AG04450 (cell line): ENCODE measurements at regions of chr14 and their contacts with region 1.

Region 1: DNA sequence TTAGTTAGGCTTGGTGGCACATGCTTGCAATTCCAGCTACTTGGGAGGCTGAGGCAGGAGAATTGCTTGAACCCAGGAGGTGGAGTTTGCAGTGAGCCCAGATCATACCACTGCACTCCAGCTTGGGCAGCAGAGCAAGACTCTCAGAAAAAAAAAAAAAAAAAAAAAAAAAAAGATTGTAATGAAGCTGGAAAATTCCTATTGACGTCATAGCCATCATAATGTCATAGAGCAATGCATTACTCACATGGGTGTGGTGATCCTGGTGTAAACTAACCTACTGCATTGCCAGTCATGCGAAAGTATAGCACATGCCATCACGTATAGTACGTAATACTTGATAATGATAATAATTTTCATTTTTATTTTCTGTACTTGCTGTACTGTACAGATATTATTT is 42.7 kb upstream of the NID2 start:
- DNase-seq: no peak
- H3K4me3 ChIP-seq: no peak overlapping the region
- H3K27ac ChIP-seq: peak overlapping the region; percentile 86
- H3K27me3 ChIP-seq: no peaks in the 10 kb centered on the region
- CTCF ChIP-seq: no peak

Region 2: DNA sequence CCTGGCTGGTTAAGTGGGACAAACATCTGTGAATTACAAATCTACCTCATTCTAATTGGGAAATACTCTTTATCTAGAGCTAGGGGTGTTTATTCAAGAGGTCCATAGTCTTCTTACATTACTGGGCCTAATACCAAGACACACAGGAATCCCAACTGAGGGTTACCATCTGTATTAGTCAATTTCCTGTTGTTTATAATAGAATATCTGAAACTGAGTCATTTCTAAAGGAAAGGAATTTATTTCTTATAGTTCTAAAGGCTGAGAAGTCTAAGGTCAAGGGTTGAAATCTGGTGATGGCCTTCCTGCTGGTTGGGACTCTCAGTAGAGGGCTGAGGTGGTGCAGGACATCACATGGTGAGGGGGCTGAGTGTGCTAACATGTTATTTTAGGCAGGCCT is 86.3 kb before region 1 on chr14:
- CTCF ChIA-PET with region 1: no interaction called
- POLR2A ChIA-PET with region 1: interaction called, 14 read pairs
- DNase-seq: peak; percentile 78
- H3K4me3 ChIP-seq: no peak overlapping the region
- H3K27ac ChIP-seq: peak overlapping the region; percentile 58
- H3K27me3 ChIP-seq: no peaks in the 10 kb centered on the region
- CTCF ChIP-seq: no peak

Region 3: DNA sequence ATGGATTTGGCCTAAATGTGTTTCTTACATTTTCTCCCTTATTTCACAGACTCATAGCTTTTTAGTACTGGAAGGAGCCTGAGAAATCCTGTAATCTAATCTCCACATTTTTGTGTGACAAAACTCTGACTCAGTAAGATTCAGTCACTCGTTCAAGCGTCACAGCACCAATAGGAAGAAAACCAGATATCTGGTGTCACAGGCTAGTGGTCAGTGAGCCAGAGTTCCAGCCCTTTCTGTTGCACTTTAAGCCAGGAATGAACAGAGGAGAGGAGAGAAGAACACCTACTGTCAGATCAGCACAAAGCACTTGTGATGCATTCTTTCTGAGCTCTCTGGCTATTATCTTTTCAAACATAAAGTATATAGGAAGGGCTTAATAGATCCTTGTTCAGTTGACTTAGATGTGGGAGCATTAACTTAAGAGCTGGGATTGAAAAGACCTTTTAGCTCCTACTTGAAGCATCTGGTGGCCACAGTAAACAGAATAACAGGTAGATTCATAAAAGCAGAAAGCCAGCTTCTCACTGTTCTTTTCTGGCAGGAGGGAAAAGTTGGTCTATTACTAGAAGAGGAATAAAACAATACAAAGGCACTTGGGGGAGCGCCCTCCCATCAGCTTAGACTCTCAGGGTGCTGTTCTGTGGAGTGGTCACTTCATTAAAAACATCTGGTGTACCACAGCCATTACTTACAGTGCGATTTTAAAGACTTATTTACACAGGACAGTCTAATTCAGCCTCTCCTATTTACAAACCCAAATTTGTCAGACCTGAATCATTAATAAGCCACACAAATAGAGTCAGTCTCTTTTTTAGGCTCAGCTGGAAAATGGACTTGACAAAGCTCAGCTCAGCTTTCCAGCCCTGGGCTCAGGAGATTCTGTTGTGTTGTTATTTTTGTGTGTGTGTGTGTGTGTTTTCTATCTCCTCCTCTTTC is 30.5 kb before region 1 on chr14:
- CTCF ChIA-PET with region 1: interaction called, 4 read pairs
- POLR2A ChIA-PET with region 1: interaction called, 46 read pairs
- DNase-seq: peak; percentile 72
- H3K4me3 ChIP-seq: no peak overlapping the region
- H3K27ac ChIP-seq: peak overlapping the region; percentile 89
- H3K27me3 ChIP-seq: no peaks in the 10 kb centered on the region
- CTCF ChIP-seq: no peak

Region 4: GRCh38 chr14:52124791-52125661 is 13.5 kb after region 1 on chr14:
- CTCF ChIA-PET with region 1: interaction called, 6 read pairs
- POLR2A ChIA-PET with region 1: interaction called, 14 read pairs
- DNase-seq: no peak
- H3K4me3 ChIP-seq: no peak overlapping the region
- H3K27ac ChIP-seq: peak overlapping the region; percentile 80
- H3K27me3 ChIP-seq: no peaks in the 10 kb centered on the region
- CTCF ChIP-seq: no peak

Region 5: DNA sequence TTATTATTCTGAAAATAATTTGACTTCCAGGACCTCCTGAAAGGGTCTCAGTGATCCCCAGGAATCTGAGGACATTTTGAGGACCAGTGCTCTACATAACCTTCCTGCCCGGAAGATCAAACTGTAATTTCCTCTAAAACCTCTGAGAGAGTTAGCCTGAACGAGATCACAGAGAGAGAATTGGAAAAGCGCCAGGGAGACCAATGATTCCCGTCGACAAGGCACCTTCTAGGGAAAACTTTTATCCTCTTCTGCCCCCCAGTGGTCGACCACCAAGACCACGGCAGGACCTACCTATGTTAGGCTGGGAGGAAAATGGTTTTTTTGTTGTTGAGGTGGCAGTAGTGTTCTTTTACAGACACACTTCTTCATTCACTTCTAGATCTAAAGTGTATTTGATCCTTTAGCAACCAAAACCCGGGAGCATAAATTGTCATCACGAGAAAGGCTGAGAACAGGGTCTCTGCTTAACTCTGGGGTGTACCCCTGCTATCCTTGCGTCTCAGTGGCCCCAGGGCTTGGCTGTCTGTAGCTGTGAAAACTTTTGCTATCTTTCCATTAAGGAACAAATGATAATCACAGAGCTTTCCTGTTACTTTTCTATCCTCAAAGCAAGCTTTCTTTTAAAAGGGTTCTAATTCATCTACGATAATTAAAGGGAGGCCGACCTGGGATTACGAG is 20.2 kb after region 1 on chr14:
- CTCF ChIA-PET with region 1: interaction called, 6 read pairs
- POLR2A ChIA-PET with region 1: interaction called, 11 read pairs
- DNase-seq: peak; percentile 93
- H3K4me3 ChIP-seq: no peak overlapping the region
- H3K27ac ChIP-seq: no peak overlapping the region
- H3K27me3 ChIP-seq: no peaks in the 10 kb centered on the region
- CTCF ChIP-seq: peak; percentile 77